ENCODE measurements at regions of chr10 and their contacts with region 1.

Region 1: DNA sequence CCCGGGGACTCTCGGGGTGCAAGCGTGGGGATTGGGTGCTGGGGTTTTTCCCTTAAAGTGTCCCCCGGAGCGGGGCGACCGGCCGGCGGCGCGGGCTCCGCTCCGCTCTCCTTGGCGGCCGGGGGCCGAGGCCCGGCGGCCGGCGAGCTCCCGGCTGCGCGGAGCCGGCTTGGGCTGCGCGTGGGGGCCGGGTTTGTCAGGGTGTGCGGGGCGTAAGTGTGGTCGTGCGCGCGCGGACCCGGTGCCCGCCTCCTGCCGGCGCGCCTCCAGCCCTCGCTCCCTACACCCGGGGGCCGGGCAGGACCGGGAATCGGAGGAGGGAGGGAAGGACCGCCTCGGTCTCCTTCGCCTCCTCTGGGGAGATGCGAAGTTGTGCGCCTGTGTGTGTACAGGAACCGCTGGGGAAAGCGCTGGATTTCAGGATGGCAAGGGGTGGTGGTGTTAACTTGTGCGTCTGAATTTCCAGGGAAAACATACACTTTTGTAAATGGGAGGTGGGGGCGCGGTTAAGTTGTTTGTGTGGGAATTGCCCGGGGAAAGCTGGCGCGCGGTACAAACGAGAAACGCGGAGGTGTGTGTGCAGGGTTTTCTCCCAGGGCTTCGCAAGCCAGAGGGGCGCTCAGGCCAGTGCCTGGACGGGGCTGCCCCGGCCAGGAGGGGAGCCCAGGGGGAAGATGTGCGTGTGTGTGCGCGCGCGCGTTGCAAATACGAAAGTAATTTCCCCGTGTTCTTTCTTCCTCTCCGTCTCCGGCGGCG is 737 bp downstream of the ZMIZ1 start:
- DNase-seq: peak in 2 of 4 donors; percentile 54 to 92
- ATAC-seq: peak; percentile 0
- H3K4me3 ChIP-seq: peak overlapping the region; percentile 64 to 87
- H3K27ac ChIP-seq: peak overlapping the region; percentile 94
- H3K4me1 ChIP-seq: peaks cover 26 to 60% of the 10 kb centered on the region in 2 donors
- H3K27me3 ChIP-seq: no peaks in the 10 kb centered on the region
- CTCF ChIP-seq: no peak

Region 2: DNA sequence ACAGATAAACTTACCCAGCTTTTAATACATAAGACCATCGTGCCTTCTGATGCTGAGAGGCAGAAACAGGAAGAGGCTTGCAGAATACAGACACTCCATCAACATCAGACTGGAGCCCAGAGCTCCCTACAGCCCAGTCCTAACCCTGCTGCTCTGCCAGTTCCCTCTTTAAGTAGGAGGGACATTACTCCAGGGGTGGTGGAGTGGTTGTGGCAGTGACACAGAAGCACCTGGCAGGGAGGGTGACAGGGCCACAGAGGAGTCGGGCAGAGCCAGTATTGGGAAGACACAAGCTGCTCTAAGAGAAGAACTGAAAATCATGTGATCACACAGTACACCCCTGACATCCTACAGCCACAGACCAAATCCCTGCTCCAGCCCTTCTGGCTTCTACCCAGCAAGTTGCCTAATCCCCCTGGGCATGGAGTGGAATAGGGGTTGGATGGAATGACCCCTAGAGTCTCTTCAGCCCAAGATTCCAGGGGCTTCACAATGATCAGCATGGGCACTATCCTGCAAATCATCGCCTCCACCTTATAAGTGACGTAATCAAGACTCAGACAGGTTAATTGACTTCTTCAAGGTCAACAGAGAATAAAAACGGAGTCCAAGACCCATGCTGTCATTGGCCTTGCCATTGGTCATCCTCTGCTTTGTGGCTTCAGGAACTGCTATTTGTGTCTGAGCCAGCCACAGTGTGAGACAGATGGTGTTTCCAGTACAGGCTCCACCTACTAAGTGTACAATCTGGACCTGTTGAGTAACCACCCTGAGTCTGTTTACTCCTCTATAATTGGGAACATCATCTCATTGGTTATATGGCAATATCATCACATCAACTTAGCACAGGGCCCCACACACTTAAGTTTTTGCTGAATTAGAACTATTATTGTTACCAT is 61.8 kb before region 1 on chr10:
- intact Hi-C with region 1: no loop called
- DNase-seq: no peak
- ATAC-seq: peak; percentile 35
- H3K4me3 ChIP-seq: no peak overlapping the region
- H3K27ac ChIP-seq: no peak overlapping the region
- H3K4me1 ChIP-seq: no peaks in the 10 kb centered on the region
- H3K27me3 ChIP-seq: no peaks in the 10 kb centered on the region
- CTCF ChIP-seq: no peak

Region 3: GRCh38 chr10:79149662-79150443 is 80.3 kb after region 1 on chr10:
- intact Hi-C with region 1: loop called in 1 of 2 experiments (anchors 10 kb)
- DNase-seq: peak in 2 of 4 donors; percentile 92 to 95
- ATAC-seq: peak; percentile 62
- H3K4me3 ChIP-seq: no peak overlapping the region
- H3K27ac ChIP-seq: peak overlapping the region; percentile 87 to 88
- H3K4me1 ChIP-seq: peaks cover 73 to 97% of the 10 kb centered on the region in 2 donors
- H3K27me3 ChIP-seq: no peaks in the 10 kb centered on the region
- CTCF ChIP-seq: no peak

Region 4: GRCh38 chr10:79185067-79185774 is 115.7 kb after region 1 on chr10:
- intact Hi-C with region 1: loop called in 1 of 2 experiments (anchors 5 kb)
- DNase-seq: peak in 3 of 4 donors; percentile 17 to 71 (median 54)
- ATAC-seq: no peak
- H3K4me3 ChIP-seq: no peak overlapping the region
- H3K27ac ChIP-seq: peak overlapping the region; percentile 44 to 61
- H3K4me1 ChIP-seq: peaks cover 67 to 100% of the 10 kb centered on the region in 2 donors
- H3K27me3 ChIP-seq: no peaks in the 10 kb centered on the region
- CTCF ChIP-seq: no peak